ENCODE measurements at regions of chr5 and their contacts with region 1.

Region 1: GRCh38 chr5:96336351-96336985 is 96.6 kb downstream of the PCSK1 start:
- DNase-seq: peak; percentile 63 to 76
- H3K4me3 ChIP-seq: no peak overlapping the region
- H3K27ac ChIP-seq: peak overlapping the region; percentile 48
- H3K4me1 ChIP-seq: peaks cover 17% of the 10 kb centered on the region
- H3K27me3 ChIP-seq: no peaks in the 10 kb centered on the region
- CTCF ChIP-seq: peak; percentile 89

Region 2: DNA sequence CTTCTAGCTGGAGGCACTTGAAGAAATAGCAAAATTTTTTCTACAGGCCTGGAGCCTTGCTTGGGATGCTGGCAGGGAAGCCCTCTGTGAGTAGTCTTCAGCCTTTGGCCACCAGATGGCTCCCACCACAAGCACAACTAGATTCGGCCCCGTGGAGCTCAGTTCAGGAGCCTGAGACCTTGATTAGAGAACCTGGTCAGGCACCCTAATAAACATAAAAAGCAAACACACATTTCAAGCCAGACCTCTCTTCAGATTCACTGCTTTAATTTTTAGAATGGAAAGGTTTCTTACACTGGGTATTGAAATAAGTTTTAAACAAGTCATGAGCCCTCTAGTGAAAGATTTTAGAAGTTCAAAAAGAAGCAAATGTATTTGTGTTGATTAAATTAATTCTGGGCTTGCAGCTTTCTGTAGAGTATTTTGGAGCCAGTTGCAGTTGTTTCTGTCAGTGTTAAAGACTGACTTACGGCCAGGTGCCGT is 555.3 kb before region 1 on chr5:
- CTCF ChIA-PET with region 1: no interaction called
- POLR2A ChIA-PET with region 1: no interaction called
- intact Hi-C with region 1: loop called (anchors 5 kb)
- DNase-seq: peak; percentile 68 to 69
- H3K4me3 ChIP-seq: no peak overlapping the region
- H3K27ac ChIP-seq: no peak overlapping the region
- H3K4me1 ChIP-seq: no peaks in the 10 kb centered on the region
- H3K27me3 ChIP-seq: no peaks in the 10 kb centered on the region
- CTCF ChIP-seq: peak; percentile 97

Region 3: GRCh38 chr5:95892780-95893354 is 443.6 kb before region 1 on chr5:
- CTCF ChIA-PET with region 1: interaction called, 7 read pairs
- POLR2A ChIA-PET with region 1: no interaction called
- intact Hi-C with region 1: loop called (anchors 1 kb)
- DNase-seq: peak in 1 of 2 experiments; percentile 37
- H3K4me3 ChIP-seq: no peak overlapping the region
- H3K27ac ChIP-seq: no peak overlapping the region
- H3K4me1 ChIP-seq: no peaks in the 10 kb centered on the region
- H3K27me3 ChIP-seq: no peaks in the 10 kb centered on the region
- CTCF ChIP-seq: peak; percentile 57

Region 4: GRCh38 chr5:96013254-96013653 is 323.2 kb before region 1 on chr5:
- CTCF ChIA-PET with region 1: interaction called, 10 read pairs
- POLR2A ChIA-PET with region 1: no interaction called
- intact Hi-C with region 1: no loop called
- DNase-seq: no peak
- H3K4me3 ChIP-seq: no peak overlapping the region
- H3K27ac ChIP-seq: no peak overlapping the region
- H3K4me1 ChIP-seq: no peaks in the 10 kb centered on the region
- H3K27me3 ChIP-seq: no peaks in the 10 kb centered on the region
- CTCF ChIP-seq: no peak

Region 5: DNA sequence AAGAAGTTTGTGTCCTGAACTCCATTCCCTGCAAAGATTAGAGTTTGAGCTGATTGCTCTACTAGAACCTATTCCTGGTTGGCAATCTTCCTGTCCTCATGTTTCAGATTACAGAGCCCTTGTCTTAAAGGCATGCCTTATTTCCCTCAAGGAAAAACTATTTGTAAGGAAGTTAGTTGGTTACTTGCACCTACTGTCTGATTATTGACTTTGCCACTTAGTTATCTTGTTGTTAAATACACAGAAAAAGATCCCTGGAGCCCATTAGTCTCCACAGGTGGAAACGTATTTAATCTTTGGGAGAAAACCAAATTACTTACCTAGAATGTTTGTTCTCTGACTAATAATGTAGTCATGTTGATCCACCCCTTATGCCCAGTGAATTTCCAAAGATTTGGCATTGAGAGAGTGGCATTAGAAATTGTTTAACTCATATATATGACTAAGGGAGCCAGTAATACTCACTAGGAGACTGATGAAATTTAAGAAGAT is 242.5 kb before region 1 on chr5:
- CTCF ChIA-PET with region 1: no interaction called
- POLR2A ChIA-PET with region 1: no interaction called
- intact Hi-C with region 1: loop called (anchors 1 kb)
- DNase-seq: peak; percentile 21 to 97
- H3K4me3 ChIP-seq: no peak overlapping the region
- H3K27ac ChIP-seq: peak overlapping the region; percentile 88
- H3K4me1 ChIP-seq: peaks cover 36% of the 10 kb centered on the region
- H3K27me3 ChIP-seq: no peaks in the 10 kb centered on the region
- CTCF ChIP-seq: no peak

Region 6: DNA sequence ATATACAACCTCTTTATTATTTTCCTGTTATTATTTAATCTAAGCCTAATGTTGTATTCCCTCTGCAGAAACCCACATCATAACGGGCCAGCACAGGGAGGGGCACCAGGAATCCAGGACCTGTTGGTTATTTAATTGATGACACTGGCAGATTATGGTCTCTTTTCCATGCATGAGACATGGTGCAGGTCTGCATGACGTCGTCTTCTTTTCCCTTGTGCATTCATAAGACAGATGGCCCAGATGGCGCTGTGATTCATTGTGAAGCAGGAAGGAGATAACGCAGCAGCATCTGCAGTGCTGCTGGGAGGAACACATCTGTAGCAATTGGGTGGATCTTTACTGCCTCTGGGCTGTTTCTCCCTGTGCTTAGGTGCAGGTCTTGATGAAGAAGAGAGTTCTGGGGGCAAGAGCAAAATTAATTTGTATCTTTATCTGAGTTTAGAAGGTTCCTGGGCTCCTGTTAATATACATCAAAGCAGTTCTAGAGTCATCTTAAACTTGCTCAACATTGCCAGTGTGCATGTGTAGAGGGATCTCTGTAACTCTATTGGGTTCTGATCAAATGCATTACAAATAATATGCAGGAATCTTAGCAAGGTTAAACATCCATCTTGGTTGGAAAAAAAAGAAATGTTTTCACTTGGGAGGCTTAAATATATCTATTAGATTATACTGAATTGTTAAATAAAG is 79.5 kb before region 1 on chr5:
- CTCF ChIA-PET with region 1: interaction called, 3 read pairs
- POLR2A ChIA-PET with region 1: no interaction called
- intact Hi-C with region 1: loop called (anchors 2 kb)
- DNase-seq: no peak
- H3K4me3 ChIP-seq: no peak overlapping the region
- H3K27ac ChIP-seq: no peak overlapping the region
- H3K4me1 ChIP-seq: peaks cover 56% of the 10 kb centered on the region
- H3K27me3 ChIP-seq: no peaks in the 10 kb centered on the region
- CTCF ChIP-seq: no peak

Region 7: GRCh38 chr5:96412868-96413449 is 76.5 kb after region 1 on chr5:
- CTCF ChIA-PET with region 1: no interaction called
- POLR2A ChIA-PET with region 1: no interaction called
- intact Hi-C with region 1: no loop called
- DNase-seq: no peak
- H3K4me3 ChIP-seq: no peak overlapping the region
- H3K27ac ChIP-seq: no peak overlapping the region
- H3K4me1 ChIP-seq: no peaks in the 10 kb centered on the region; the same call in 1 of the 2 replicates
- H3K27me3 ChIP-seq: peaks cover 5% of the 10 kb centered on the region; the same call in 1 of the 2 replicates
- CTCF ChIP-seq: no peak